A673 (cell line): ENCODE measurements at regions of chr19 and their contacts with region 1.

Region 1: DNA sequence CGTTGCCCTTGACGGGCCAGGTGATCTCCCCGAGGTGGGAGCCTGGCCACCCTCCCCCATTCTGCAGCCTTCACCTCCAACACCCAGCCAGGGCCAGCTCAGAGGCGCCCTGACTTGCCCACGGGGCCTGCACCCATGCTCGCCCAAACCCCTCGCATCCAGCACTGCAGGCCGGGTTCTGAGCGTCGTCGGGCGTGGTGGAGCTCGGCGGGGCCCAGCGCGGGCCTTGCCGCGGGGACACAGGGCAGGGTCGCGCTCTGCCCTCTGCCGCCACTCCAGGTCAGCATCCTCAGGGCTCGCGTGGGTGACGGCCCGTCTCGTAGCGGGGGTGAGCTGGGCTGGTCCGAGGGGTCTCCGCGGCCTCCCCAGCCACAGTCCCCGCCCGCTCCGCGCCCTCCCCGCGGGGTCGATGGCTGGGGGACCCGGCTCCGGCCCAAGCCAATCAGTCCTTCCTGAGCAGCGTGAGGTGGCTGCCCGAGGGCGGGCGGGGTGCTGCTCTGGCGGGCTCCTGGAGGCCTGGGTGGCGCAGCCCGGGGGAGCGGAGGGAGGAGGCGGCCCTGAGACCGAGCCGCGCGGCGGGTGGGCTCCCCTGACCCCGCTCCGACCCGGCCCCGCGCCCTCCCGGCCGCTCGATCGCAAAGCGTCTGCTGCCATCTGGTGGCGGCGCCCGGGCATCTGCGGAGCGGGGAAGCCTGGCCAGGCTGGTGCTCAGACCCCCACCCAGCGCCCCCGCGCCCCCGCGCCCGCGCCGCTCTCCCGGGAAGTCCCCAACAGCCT is 61.4 kb downstream of the CCNE1 start:
- DNase-seq: peak; percentile 48
- H3K4me3 ChIP-seq: peak overlapping the region; percentile 52
- H3K27ac ChIP-seq: no peak overlapping the region
- H3K4me1 ChIP-seq: peaks cover 5% of the 10 kb centered on the region
- H3K27me3 ChIP-seq: no peaks in the 10 kb centered on the region
- CTCF ChIP-seq: peak; percentile 66

Region 2: DNA sequence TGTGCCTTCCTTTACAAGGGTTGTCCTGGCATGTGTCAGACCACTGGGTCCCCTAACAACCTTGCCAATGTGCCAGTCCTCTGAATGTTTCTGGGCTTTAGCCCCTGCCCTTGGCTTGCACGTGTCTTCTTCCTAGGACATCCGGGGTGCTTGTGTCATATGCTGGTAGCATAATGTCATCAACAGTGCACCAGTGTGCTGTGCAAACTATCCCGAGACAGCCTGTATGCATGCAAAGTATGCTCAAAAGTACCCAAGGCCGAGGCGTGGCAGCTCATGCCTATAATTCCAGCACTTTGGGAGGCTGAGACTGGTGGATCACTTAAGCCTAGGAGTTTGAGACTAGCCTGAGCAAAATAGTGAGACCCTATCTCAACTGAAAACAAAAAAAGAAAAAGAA is 137.4 kb before region 1 on chr19:
- CTCF ChIA-PET with region 1: interaction called, 8 read pairs
- POLR2A ChIA-PET with region 1: no interaction called
- intact Hi-C with region 1: loop called (anchors 1 kb)
- DNase-seq: no peak
- H3K4me3 ChIP-seq: no peak overlapping the region
- H3K27ac ChIP-seq: no peak overlapping the region
- H3K4me1 ChIP-seq: no peaks in the 10 kb centered on the region
- H3K27me3 ChIP-seq: no peaks in the 10 kb centered on the region
- CTCF ChIP-seq: no peak

Region 3: GRCh38 chr19:29761575-29762232 is 111.5 kb before region 1 on chr19:
- CTCF ChIA-PET with region 1: no interaction called
- POLR2A ChIA-PET with region 1: no interaction called
- intact Hi-C with region 1: loop called (anchors 2 kb)
- DNase-seq: no peak
- H3K4me3 ChIP-seq: no peak overlapping the region
- H3K27ac ChIP-seq: no peak overlapping the region
- H3K4me1 ChIP-seq: no peaks in the 10 kb centered on the region
- H3K27me3 ChIP-seq: peaks cover 3% of the 10 kb centered on the region
- CTCF ChIP-seq: no peak

Region 4: GRCh38 chr19:30136611-30137195 is 263.5 kb after region 1 on chr19:
- CTCF ChIA-PET with region 1: no interaction called
- POLR2A ChIA-PET with region 1: no interaction called
- intact Hi-C with region 1: no loop called
- DNase-seq: no peak
- H3K4me3 ChIP-seq: no peak overlapping the region
- H3K27ac ChIP-seq: no peak overlapping the region
- H3K4me1 ChIP-seq: no peaks in the 10 kb centered on the region
- H3K27me3 ChIP-seq: no peaks in the 10 kb centered on the region
- CTCF ChIP-seq: no peak